HCT116 (cell line): ENCODE measurements at regions of chr11 and their contacts with region 1.

Region 1: GRCh38 chr11:12043959-12044819 is 35.8 kb upstream of the DKK3 start:
- DNase-seq: peak; percentile 92
- ATAC-seq: peak; percentile 88
- H3K4me3 ChIP-seq: peak overlapping the region; percentile 27 to 43; a peak in 3 of 4 replicates
- H3K27ac ChIP-seq: peak overlapping the region; percentile 51; the same call in 1 of the 2 replicates
- H3K4me1 ChIP-seq: peaks cover 8 to 45% of the 10 kb centered on the region in 2 experiments; a peak in 2 of 4 replicates
- H3K27me3 ChIP-seq: no peaks in the 10 kb centered on the region
- CTCF ChIP-seq: peak; percentile 84 to 97 (median 93)
- POLR2A ChIP-seq: no peak
- RAD21 ChIP-seq: peak; percentile 99

Region 2: GRCh38 chr11:11028017-11028692 is 1016.0 kb before region 1 on chr11:
- CTCF ChIA-PET with region 1: interaction called, 7 read pairs
- POLR2A ChIA-PET with region 1: no interaction called
- RAD21 ChIA-PET with region 1: no interaction called
- intact Hi-C with region 1: loop called (anchors 5 kb)
- DNase-seq: peak; percentile 47
- ATAC-seq: peak; percentile 100
- H3K4me3 ChIP-seq: no peak overlapping the region
- H3K27ac ChIP-seq: no peak overlapping the region
- H3K4me1 ChIP-seq: peaks cover 0 to 6% of the 10 kb centered on the region in 2 experiments; a peak in 1 of 4 replicates
- H3K27me3 ChIP-seq: no peaks in the 10 kb centered on the region
- CTCF ChIP-seq: peak; percentile 76 to 95 (median 92)
- POLR2A ChIP-seq: no peak
- RAD21 ChIP-seq: peak; percentile 89

Region 3: DNA sequence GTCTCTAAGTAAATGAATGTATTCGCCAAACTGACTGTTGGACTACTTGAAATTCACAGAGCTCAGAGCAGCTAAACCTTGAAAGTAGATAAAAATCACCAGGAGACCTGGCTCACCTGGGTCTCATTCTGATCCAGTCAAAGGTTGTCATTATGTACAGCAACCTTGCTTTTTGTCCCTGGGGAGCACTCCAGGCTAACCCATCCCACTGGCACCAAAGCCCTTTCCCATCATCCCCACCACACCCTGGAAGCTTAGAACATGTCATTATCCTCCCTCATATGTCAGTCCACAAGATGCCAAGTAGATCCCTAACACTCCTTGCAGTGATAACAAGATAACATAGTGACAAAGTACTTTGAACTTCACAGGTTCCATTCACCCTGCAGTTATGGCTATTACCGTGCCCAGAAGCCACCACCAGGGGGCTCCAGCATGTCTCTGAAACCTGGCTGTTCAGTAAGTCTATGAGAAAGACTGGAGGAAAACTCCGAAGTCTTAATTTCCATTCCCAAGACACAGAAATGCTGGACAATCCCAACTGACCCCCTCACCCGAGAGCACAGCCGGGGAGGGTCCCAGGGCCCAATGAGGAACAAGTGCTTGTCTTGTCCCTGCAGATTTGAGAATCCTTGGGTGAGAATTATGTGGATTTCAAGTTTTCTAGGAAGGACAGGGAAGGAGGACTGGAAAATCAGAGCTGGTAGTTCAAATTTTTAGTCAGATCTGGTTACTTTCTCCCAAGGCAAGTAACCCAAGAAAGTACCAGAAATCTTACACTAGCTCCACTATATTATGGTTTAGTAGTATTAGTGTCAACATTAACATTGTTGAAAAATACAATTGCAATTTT is 245.4 kb before region 1 on chr11:
- CTCF ChIA-PET with region 1: interaction called, 24 read pairs
- POLR2A ChIA-PET with region 1: no interaction called
- RAD21 ChIA-PET with region 1: no interaction called
- intact Hi-C with region 1: loop called (anchors 1 kb)
- DNase-seq: peak; percentile 60
- ATAC-seq: peak; percentile 97
- H3K4me3 ChIP-seq: no peak overlapping the region
- H3K27ac ChIP-seq: no peak overlapping the region
- H3K4me1 ChIP-seq: peaks cover 0 to 3% of the 10 kb centered on the region in 2 experiments; a peak in 1 of 4 replicates
- H3K27me3 ChIP-seq: no peaks in the 10 kb centered on the region
- CTCF ChIP-seq: peak; percentile 89 to 97 (median 95)
- POLR2A ChIP-seq: no peak
- RAD21 ChIP-seq: peak; percentile 92

Region 4: DNA sequence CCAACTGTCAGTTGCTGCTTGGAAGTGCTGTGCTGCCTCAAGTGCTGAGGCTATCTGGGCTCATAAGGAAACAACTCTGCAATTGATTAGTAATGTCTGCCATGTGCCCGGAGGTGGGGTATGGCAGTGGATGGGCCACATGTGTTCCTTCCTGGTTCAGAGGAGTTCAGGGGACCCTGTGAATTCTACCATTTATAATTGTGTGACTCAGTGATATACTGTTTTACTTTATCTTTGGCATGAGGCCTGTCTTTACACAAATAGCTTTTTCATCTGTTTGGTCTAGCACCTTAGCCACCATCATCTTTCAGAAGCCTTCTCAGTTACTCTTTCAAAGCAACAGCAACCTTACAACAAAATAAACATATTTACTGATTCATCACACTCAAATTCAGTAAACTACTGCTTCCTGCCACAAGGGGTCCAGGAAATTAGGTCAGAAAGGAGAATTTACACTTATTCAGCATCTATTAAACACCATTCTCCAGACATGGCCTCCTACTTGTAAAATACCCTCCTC is 56.6 kb before region 1 on chr11:
- CTCF ChIA-PET with region 1: no interaction called
- POLR2A ChIA-PET with region 1: no interaction called
- RAD21 ChIA-PET with region 1: interaction called in 1 of 2 experiments, 5 read pairs
- intact Hi-C with region 1: loop called (anchors 5 kb)
- DNase-seq: no peak
- ATAC-seq: peak; percentile 47; the same call in 1 of the 2 replicates
- H3K4me3 ChIP-seq: no peak overlapping the region
- H3K27ac ChIP-seq: no peak overlapping the region
- H3K4me1 ChIP-seq: peaks cover 4 to 26% of the 10 kb centered on the region in 2 experiments
- H3K27me3 ChIP-seq: no peaks in the 10 kb centered on the region
- CTCF ChIP-seq: peak in 2 of 3 experiments; percentile 41 to 59; a peak in 4 of 6 replicates
- POLR2A ChIP-seq: no peak
- RAD21 ChIP-seq: no peak; the same call in 1 of the 2 replicates

Region 5: GRCh38 chr11:12235947-12236743 is 192.0 kb after region 1 on chr11:
- CTCF ChIA-PET with region 1: interaction called, 15 read pairs
- POLR2A ChIA-PET with region 1: no interaction called
- RAD21 ChIA-PET with region 1: interaction called in 1 of 2 experiments, 3 read pairs
- intact Hi-C with region 1: loop called (anchors 1 kb)
- DNase-seq: peak; percentile 32
- ATAC-seq: peak; percentile 75
- H3K4me3 ChIP-seq: no peak overlapping the region
- H3K27ac ChIP-seq: no peak overlapping the region
- H3K4me1 ChIP-seq: peaks cover 4 to 23% of the 10 kb centered on the region in 2 experiments; a peak in 3 of 4 replicates
- H3K27me3 ChIP-seq: no peaks in the 10 kb centered on the region
- CTCF ChIP-seq: peak; percentile 55 to 82 (median 69)
- POLR2A ChIP-seq: no peak
- RAD21 ChIP-seq: peak; percentile 83

Region 6: DNA sequence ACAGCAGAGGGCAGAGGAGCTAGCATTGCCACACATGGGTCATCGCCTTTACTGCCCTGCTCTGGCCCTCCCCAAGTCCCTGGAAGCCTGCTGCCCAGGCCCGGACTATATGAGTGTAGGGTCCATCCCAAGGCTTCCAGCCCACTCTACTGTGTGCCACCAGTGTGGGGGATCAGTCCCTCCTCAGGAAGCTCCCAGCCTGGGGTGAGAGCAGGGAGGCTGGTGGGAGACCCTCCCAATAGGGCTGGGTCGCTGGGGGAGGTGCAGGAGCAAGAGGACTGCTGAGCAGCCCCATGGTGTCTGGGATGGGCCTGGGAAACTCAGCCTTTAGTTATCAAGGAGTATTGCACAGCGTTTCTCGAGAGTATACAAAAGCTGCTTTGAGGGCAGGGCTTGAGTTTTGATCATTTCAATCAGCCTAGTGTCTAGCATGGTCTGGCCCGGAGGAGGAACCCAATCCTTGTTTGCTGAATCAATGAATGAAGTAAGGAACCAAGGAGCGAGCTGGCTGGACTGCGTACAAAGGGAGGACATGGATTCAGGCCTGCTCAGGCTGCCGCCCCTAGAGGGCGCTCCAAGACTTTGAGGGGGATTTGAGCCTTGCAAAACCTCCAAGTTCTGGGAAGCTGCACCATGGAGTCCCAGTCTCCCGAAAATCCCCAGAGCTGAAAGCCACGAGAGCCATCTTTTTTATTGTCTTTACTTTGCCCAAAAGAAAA is 244.2 kb after region 1 on chr11:
- CTCF ChIA-PET with region 1: interaction called, 104 read pairs
- POLR2A ChIA-PET with region 1: no interaction called
- RAD21 ChIA-PET with region 1: interaction called in 1 of 2 experiments, 5 read pairs
- intact Hi-C with region 1: no loop called
- DNase-seq: peak; percentile 71
- ATAC-seq: peak; percentile 54
- H3K4me3 ChIP-seq: peak overlapping the region; percentile 20 to 50; a peak in 2 of 4 replicates
- H3K27ac ChIP-seq: peak overlapping the region; percentile 62
- H3K4me1 ChIP-seq: peaks cover 25 to 39% of the 10 kb centered on the region in 2 experiments
- H3K27me3 ChIP-seq: no peaks in the 10 kb centered on the region
- CTCF ChIP-seq: peak; percentile 83 to 96 (median 95)
- POLR2A ChIP-seq: no peak
- RAD21 ChIP-seq: peak; percentile 95